Heart right ventricle (tissue), 16 donors: ENCODE measurements at regions of chr5 and their contacts with region 1.

Region 1: DNA sequence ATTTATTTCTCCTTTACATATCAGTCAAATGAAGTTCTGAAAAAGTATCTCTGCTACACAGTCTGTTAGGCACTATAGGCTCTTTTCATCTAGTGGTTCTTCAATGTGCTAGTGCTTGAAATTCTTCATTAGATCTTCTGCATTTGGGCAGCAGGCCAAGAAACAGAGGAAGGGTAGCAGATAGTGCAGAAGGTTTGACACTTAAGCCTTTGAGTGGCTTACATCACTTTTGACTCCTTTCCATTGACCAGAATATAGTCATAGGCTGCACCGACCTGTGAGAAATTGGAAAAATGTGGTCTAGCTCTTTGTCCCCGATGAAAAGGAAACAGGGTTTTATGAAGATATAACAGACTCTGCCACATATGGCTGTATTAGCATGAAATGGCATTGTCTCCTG is 459.5 kb upstream of the PTGER4 start:
- DNase-seq: no peak
- ATAC-seq: peak in 1 of 8 donors; percentile 56
- H3K4me3 ChIP-seq: no peak overlapping the region
- H3K27ac ChIP-seq: no peak overlapping the region
- H3K4me1 ChIP-seq: peaks cover 0 to 5% (median 0%) of the 10 kb centered on the region in 9 donors
- H3K27me3 ChIP-seq: no peaks in the 10 kb centered on the region
- CTCF ChIP-seq: no peak

Region 2: DNA sequence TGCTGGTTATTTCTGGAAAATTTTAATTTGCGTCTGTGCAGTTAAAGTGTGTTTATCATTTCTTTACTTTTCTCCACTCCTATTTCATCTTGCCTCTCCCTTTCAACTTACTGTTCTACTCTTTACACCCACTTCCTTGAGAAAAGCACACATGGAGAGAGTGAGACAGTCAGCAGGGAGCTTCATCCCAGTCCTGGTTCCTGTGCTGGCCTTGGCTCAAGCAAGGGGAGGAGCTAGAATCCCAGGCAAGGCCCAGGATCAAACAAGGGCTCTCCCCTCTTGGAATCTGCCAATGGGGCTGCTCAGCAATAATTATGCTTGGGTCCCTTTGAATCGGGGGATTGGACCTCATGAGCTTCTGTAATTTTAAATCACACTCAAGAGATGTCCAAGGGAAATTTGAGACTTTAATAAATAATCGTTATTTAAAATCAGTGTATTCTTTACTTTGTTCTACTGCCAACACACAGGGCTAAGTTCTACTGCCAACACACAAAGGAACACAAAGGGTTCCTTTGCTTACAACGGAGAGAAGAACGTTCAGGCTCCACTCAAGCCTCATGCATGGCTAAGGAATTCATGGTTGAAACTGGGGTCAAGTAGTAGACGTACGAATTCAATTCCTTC is 356.2 kb before region 1 on chr5:
- intact Hi-C with region 1: no loop called
- DNase-seq: no peak
- ATAC-seq: no peak
- H3K4me3 ChIP-seq: no peak overlapping the region
- H3K27ac ChIP-seq: no peak overlapping the region
- H3K4me1 ChIP-seq: no peaks in the 10 kb centered on the region
- H3K27me3 ChIP-seq: no peaks in the 10 kb centered on the region
- CTCF ChIP-seq: no peak

Region 3: DNA sequence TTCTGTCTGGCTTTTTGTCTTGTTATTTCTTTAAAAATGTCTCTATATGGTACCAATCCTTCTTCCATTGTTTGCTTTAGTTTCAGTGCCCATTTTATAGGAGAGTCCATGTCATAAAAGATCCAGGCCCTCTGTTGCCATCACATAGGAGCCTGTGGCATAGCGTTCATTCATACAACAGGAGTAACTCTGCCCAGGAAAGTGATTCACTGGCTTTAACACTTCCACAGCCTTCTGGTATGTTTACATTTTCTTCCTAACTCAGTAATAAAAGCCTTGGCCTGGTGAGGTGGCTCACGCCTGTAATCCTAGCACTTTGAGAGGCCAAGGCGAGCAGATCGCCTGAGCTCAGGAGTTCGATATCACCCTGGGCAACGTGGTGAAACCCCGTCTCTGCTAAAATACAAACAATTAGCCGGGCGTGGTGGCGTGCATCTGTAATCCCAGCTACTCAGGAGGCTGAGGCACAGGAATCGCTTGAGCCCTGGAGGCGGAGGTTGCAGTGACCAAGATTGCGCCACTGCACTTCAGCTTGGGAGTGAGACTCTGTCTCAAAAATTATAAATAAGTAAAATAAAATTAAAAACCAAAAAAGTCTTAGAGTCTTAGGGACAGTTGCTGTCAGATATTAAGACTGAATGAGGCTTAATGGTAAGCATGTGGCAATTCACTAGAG is 59.7 kb before region 1 on chr5:
- intact Hi-C with region 1: loop called in 1 of 10 experiments (anchors 2 kb)
- DNase-seq: no peak
- ATAC-seq: no peak
- H3K4me3 ChIP-seq: no peak overlapping the region
- H3K27ac ChIP-seq: no peak overlapping the region
- H3K4me1 ChIP-seq: no peaks in the 10 kb centered on the region
- H3K27me3 ChIP-seq: no peaks in the 10 kb centered on the region
- CTCF ChIP-seq: no peak

Region 4: GRCh38 chr5:40191150-40191549 is 29.1 kb before region 1 on chr5:
- intact Hi-C with region 1: no loop called
- DNase-seq: no peak
- ATAC-seq: no peak
- H3K4me3 ChIP-seq: no peak overlapping the region
- H3K27ac ChIP-seq: no peak overlapping the region
- H3K4me1 ChIP-seq: no peaks in the 10 kb centered on the region
- H3K27me3 ChIP-seq: no peaks in the 10 kb centered on the region
- CTCF ChIP-seq: no peak

Region 5: GRCh38 chr5:42021119-42021518 is 1800.9 kb after region 1 on chr5:
- intact Hi-C with region 1: no loop called
- DNase-seq: no peak
- ATAC-seq: no peak
- H3K4me3 ChIP-seq: no peak overlapping the region
- H3K27ac ChIP-seq: no peak overlapping the region
- H3K4me1 ChIP-seq: no peaks in the 10 kb centered on the region
- H3K27me3 ChIP-seq: peaks cover 0 to 5% (median 0%) of the 10 kb centered on the region in 7 donors
- CTCF ChIP-seq: no peak